ENCODE measurements at regions of chr15 and their contacts with region 1.

Region 1: GRCh38 chr15:91224755-91225380 is 124.8 kb downstream of the SV2B start:
- DNase-seq: no peak
- ATAC-seq: peak; percentile 47

Region 2: GRCh38 chr15:90970274-90970673 is 254.6 kb before region 1 on chr15:
- intact Hi-C with region 1: no loop called
- DNase-seq: no peak
- ATAC-seq: no peak

Region 3: DNA sequence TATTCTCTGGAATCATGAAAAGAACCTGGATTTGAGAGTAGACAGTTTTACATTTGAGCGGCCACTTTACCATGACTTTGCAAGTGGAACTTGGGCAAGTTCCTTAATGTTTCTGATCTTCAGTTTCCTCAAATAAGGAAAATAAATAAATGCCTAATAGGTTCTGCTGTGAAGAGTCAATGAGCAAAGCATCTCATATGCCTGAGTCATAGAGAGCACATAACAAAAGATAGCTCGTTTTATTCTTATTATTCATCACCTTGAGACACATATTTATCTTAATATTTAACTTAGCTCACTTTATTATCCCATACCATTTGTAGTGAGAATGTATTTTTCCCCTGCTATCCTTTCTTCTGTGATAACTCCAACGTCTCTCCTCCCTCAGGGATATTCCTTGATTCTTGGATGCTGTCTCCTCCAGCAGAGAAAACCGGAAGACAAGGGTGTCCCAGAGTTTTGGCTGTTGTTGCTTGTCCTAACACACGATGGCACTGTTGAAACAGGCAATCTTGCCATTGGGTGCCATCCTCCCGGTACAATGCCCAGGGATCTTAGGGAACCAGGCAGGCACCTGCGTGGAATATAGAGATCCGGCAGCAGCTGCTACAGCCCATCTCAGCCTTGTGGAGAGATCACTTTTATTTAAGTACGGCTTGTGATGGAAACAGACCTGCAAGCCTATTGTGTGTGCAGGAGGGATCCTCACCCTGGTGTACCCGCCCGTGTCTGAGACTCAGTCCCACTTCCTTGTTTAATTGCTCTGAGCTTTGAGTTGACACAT is 169.1 kb before region 1 on chr15:
- intact Hi-C with region 1: loop called in 1 of 2 experiments (anchors 5 kb)
- DNase-seq: peak in 1 of 2 donors; percentile 47
- ATAC-seq: peak; percentile 97

Region 4: GRCh38 chr15:91116113-91117067 is 108.5 kb before region 1 on chr15:
- intact Hi-C with region 1: no loop called
- DNase-seq: no peak
- ATAC-seq: peak; percentile 25

Region 5: DNA sequence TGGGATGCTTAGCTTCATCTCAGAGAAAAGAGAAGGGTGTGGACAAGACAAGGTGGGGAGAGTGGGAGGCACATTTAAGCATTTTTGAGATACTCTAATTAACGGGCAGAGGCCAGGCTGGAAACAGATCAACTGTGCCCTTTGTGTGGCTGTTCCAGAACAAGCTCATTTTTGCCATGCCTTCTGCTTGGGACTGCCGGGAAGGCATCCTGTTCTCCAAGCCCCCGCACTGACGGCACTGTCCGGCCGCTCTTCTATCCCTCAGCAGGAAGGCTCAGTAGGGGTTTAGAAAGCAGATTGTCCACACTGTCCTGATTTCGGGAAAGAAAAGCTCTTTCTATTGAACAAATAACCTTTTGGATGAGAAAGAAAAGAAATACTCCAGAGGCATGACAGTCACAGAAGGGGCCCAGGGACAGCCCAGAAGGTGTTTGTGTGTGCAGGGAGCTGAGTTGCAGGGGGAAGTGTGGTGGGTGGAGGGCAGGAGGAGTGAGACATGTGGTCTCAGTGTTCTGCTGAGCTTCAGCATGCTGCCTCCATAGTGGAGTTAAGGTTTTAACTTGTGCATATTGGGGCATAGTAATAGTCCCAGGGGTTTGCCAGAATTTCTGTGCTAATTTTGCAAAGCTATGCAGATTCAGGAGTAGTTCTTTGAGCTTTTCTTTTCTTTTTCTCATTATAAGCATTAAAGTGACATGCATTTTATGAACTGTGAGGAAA is 97.5 kb before region 1 on chr15:
- intact Hi-C with region 1: no loop called
- DNase-seq: no peak
- ATAC-seq: no peak

Region 6: DNA sequence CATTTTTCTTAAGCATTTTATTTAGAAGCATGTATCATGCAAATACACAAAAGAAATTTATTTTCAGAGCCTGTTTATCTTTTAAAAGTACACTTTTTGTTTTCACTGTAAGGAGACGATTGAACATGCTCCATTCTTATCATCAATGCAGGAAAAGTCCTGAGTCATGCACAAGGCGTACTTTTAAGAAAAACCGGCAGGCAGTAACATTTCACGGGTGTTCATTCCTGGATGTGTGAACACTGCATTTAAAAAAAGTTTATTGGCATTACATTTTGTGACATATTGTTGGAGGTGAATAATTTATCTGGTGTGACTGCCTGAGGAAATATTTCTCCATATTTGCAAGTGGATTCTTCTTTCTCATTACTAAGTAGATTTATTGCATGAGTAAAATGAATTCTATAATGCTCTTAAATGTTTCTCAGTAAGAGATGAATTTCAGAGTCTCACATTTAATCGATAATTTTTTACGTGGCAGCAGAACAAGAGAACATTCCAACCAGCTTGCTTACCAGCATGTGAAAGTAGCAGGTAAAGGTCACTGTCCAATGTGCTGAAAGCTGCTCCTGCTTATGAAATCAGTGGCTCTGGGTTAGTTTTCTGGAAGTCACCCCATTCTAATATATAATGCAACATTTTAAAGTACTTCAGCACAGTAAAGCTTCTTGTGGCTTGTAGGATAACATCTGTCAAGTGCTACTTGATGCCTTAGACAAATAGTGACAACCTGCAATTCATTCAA is 37.8 kb before region 1 on chr15:
- intact Hi-C with region 1: no loop called
- DNase-seq: no peak
- ATAC-seq: no peak

Measured in left colon (tissue), 2 donors.